ENCODE measurements at regions of chr10 and their contacts with region 1.

Region 1: GRCh38 chr10:114157909-114158308 is 16.1 kb downstream of the CCDC186 start:
- DNase-seq: no peak
- H3K4me3 Mint-ChIP-seq: no peak overlapping the region
- H3K27ac Mint-ChIP-seq: no peak overlapping the region
- H3K4me1 Mint-ChIP-seq: peaks cover 3% of the 10 kb centered on the region
- H3K27me3 Mint-ChIP-seq: no peaks in the 10 kb centered on the region

Region 2: DNA sequence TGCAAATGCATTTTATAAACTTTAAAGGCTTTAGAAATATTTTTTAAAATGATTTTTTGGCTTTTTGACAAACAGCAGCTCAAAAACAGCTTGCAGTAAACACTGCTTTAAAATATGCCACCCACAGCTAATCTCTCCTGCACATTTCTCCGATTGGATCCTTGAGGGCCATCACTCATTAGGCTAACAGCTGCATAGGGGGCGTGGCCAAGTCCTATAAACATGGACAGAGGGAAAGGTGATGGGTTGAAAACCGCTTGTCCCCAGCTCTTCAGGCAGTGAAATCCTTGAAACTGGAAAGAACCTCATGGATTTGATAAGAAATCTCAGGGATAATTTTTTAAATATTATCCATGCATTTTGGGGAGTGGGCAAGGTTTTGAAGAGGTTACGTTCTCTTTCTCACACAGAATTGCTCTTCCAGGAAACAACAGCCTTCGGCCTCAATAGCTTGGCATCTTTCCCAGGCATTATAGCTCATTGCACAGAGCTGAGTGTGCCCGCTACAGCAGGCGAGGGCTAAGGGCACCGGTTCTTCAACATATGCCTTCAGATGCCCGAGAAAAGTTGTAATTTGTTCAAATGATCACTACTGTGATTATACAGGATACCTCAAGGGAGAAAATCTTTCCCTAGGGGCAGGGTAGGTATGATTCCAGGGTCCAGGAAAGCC is 404.8 kb before region 1 on chr10:
- CTCF ChIA-PET with region 1: no interaction called
- POLR2A ChIA-PET with region 1: interaction called, 16 read pairs
- DNase-seq: no peak
- H3K4me3 Mint-ChIP-seq: no peak overlapping the region
- H3K27ac Mint-ChIP-seq: no peak overlapping the region
- H3K4me1 Mint-ChIP-seq: no peaks in the 10 kb centered on the region
- H3K27me3 Mint-ChIP-seq: peaks cover 8% of the 10 kb centered on the region

Region 3: DNA sequence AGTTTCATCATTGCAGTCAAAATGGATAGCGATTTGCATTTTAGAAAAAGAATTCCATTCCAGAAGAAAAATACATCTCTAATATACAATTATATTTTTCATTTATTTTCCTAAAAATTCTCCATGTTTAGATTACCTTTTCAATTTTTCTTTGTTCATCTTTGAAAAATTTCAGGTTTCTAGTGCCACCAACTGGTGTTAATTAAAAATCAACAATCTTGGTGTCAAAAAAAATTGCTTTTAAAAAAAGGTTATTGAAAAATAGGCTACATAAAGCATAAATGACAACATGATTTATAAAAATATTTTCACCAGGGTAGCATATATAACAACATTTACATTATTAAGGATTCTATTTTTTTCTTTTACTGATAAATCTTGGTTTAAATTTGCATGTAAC is 36.9 kb before region 1 on chr10:
- CTCF ChIA-PET with region 1: no interaction called
- POLR2A ChIA-PET with region 1: no interaction called
- DNase-seq: no peak
- H3K4me3 Mint-ChIP-seq: no peak overlapping the region
- H3K27ac Mint-ChIP-seq: no peak overlapping the region
- H3K4me1 Mint-ChIP-seq: no peaks in the 10 kb centered on the region
- H3K27me3 Mint-ChIP-seq: peaks cover 4% of the 10 kb centered on the region